Kidney (tissue), 22 donors: ENCODE measurements at regions of chr12 and their contacts with region 1.

Region 1: GRCh38 chr12:546921-547845 is 87.4 kb downstream of the B4GALNT3 start:
- DNase-seq: peak; percentile 66 to 88 (median 76)
- H3K4me3 ChIP-seq: no peak overlapping the region
- H3K27ac ChIP-seq: no peak overlapping the region
- H3K4me1 ChIP-seq: no peaks in the 10 kb centered on the region
- H3K27me3 ChIP-seq: no peaks in the 10 kb centered on the region
- CTCF ChIP-seq: peak; percentile 98

Region 2: DNA sequence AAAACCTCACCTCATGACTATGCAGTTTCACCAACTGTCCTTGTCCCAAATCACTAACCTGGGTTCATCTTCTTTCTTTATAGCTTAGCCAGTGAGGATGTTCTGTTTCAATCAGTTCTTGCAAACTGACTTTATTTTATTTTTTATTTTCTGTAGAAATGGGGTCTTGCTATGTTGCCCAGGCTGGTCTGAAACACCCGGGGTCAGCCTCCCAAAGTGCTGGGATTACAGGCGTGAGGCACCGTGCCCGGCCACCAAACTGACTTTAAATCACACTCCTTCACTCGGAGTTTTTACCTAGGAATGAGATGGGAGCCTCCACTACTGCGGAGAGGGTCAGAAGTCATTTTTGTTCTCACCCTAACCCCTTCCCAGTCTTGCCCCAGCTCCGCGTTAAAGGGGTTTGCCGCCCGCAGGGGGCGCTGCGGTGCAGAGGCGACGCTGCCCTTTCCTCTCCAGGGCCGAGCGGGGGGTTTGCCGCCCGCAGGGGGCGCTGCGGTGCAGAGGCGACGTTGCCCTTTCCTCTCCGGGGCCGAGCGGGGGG is 94.4 kb before region 1 on chr12:
- intact Hi-C with region 1: loop called (anchors 5 kb)
- DNase-seq: no peak
- H3K4me3 ChIP-seq: no peak overlapping the region
- H3K27ac ChIP-seq: no peak overlapping the region
- H3K4me1 ChIP-seq: no peaks in the 10 kb centered on the region
- H3K27me3 ChIP-seq: no peaks in the 10 kb centered on the region
- CTCF ChIP-seq: no peak

Region 3: DNA sequence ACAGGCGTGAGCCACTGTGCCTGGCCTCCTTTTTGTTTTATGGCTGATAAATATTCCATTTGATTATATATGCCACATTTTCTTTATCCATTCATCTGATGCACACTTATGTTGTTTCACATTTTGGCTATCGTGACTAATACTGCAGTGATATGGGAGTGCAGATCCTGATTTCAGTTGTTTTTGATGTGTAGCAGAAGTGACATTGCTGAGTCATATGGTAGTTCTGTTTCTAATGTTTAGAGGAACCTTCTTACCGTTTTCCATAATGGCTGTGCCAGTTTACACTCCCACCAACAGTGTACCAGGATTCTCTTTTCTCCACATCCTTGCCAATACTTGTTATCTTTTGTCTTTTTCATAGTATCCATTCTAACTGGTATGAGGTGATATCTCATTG is 679.8 kb after region 1 on chr12:
- intact Hi-C with region 1: no loop called
- DNase-seq: no peak
- H3K4me3 ChIP-seq: no peak overlapping the region
- H3K27ac ChIP-seq: no peak overlapping the region
- H3K4me1 ChIP-seq: no peaks in the 10 kb centered on the region
- H3K27me3 ChIP-seq: no peaks in the 10 kb centered on the region
- CTCF ChIP-seq: no peak